ENCODE measurements at regions of chr5 and their contacts with region 1.

Region 1: GRCh38 chr5:129094087-129094923 is at the start of gene ISOC1:
- DNase-seq: peak; percentile 94
- H3K4me3 Mint-ChIP-seq: peak within 1 kb of the TSS; percentile 82
- H3K27ac Mint-ChIP-seq: peak within 1 kb of the TSS; percentile 64
- H3K4me1 Mint-ChIP-seq: peaks cover 22% of the 10 kb centered on the region
- H3K27me3 Mint-ChIP-seq: peaks cover 7% of the 10 kb centered on the region
- total RNA-seq, gene ISOC1: 23.3 to 25.1 TPM

Region 2: GRCh38 chr5:127517480-127518318 is 1576.6 kb before region 1 on chr5 and contains the start of gene PRRC1:
- CTCF ChIA-PET with region 1: no interaction called
- POLR2A ChIA-PET with region 1: no interaction called
- intact Hi-C with region 1: loop called (anchors 2 kb)
- DNase-seq: peak; percentile 87
- H3K4me3 Mint-ChIP-seq: peak within 1 kb of the TSS; percentile 84
- H3K27ac Mint-ChIP-seq: peak within 1 kb of the TSS; percentile 50
- H3K4me1 Mint-ChIP-seq: peaks cover 33% of the 10 kb centered on the region
- H3K27me3 Mint-ChIP-seq: peaks cover 3% of the 10 kb centered on the region
- total RNA-seq, gene PRRC1: 39.4 to 44.0 TPM

Region 3: GRCh38 chr5:129113871-129114270 is 19.6 kb after region 1 on chr5:
- CTCF ChIA-PET with region 1: no interaction called
- POLR2A ChIA-PET with region 1: interaction called, 3 read pairs
- intact Hi-C with region 1: loop called (anchors 2 kb)
- DNase-seq: no peak
- H3K4me3 Mint-ChIP-seq: no peak overlapping the region
- H3K27ac Mint-ChIP-seq: no peak overlapping the region
- H3K4me1 Mint-ChIP-seq: peaks cover 5% of the 10 kb centered on the region
- H3K27me3 Mint-ChIP-seq: no peaks in the 10 kb centered on the region

Region 4: GRCh38 chr5:129125810-129126209 is 31.5 kb after region 1 on chr5:
- CTCF ChIA-PET with region 1: interaction called, 16 read pairs
- POLR2A ChIA-PET with region 1: interaction called, 8 read pairs
- intact Hi-C with region 1: loop called (anchors 1 kb)
- DNase-seq: no peak
- H3K4me3 Mint-ChIP-seq: peak overlapping the region; percentile 47
- H3K27ac Mint-ChIP-seq: peak overlapping the region; percentile 55
- H3K4me1 Mint-ChIP-seq: peaks cover 9% of the 10 kb centered on the region
- H3K27me3 Mint-ChIP-seq: no peaks in the 10 kb centered on the region

Measured in activated CD4-positive, alpha-beta memory T cell treated with anti-CD3 and anti-CD28 coated beads for 36 hours (primary cell).